ENCODE measurements at regions of chr2 and their contacts with region 1.

Region 1: DNA sequence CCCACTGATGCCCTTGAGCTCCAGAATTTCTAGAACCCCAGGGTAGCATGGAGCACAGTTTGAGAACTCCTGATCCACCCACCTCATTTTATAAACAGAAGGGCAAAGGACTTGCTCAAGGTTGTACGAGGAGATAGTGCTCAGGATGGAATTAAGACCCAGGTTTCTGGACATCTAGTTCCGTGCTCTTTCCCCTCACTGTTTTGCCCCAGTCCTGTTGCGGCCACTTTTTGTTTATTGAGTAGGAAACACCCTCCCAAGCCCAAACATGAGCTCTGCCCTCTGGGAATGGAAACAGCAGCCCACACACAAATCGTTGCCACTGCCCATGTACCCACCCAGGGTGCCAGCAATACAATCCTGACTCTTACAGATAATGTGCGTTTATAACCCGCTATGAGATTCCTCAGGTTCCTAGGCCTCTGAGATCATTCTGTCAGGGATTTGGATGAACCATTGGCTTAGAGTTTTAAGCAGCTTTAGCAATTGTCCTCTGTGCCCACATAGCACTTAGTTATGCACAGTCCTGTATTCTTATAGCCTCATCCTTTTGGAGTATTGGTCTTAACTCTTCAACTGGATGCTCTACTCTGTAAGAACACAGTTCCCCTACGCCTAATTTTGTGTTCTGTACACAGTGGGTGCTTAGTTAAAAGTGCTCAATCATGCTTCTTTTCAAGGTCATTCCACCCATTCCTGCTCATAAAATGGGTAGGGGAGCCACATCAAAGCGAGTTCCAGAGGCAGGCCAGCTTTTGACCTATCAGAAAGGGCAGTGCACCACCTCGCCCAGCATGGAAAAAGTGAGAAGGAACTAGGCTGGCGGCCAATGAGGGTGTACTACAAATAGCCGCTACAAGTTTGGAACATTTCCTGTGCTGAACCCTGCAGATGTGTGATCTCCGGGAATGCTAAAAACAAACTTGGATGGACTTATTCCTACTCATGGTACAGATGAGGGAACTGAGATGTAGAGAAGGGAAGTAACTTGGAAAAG is 60.3 kb upstream of the IGFBP2 start:
- DNase-seq: no peak
- H3K4me3 ChIP-seq: no peak overlapping the region
- H3K27ac ChIP-seq: no peak overlapping the region
- H3K4me1 ChIP-seq: peaks cover 20% of the 10 kb centered on the region
- H3K27me3 ChIP-seq: no peaks in the 10 kb centered on the region
- CTCF ChIP-seq: no peak

Region 2: GRCh38 chr2:216584112-216584511 is 11.2 kb after region 1 on chr2:
- CTCF ChIA-PET with region 1: no interaction called
- POLR2A ChIA-PET with region 1: no interaction called
- intact Hi-C with region 1: no loop called
- DNase-seq: no peak
- H3K4me3 ChIP-seq: no peak overlapping the region
- H3K27ac ChIP-seq: no peak overlapping the region
- H3K4me1 ChIP-seq: peaks cover 9% of the 10 kb centered on the region
- H3K27me3 ChIP-seq: no peaks in the 10 kb centered on the region
- CTCF ChIP-seq: no peak

Region 3: GRCh38 chr2:218168635-218169462 is 1596.0 kb after region 1 on chr2:
- CTCF ChIA-PET with region 1: no interaction called
- POLR2A ChIA-PET with region 1: no interaction called
- intact Hi-C with region 1: loop called (anchors 10 kb)
- DNase-seq: peak; percentile 74
- H3K4me3 ChIP-seq: no peak overlapping the region
- H3K27ac ChIP-seq: no peak overlapping the region
- H3K4me1 ChIP-seq: no peaks in the 10 kb centered on the region
- H3K27me3 ChIP-seq: peaks cover 7% of the 10 kb centered on the region
- CTCF ChIP-seq: peak; percentile 88